ENCODE measurements at regions of chr10 and their contacts with region 1.

Region 1: GRCh38 chr10:112774798-112775197 is 175.2 kb upstream of the TCF7L2 start:
- DNase-seq: peak in 2 of 10 donors; percentile 24 to 47
- H3K4me3 ChIP-seq: no peak overlapping the region
- H3K27ac ChIP-seq: no peak overlapping the region
- H3K27me3 ChIP-seq: no peaks in the 10 kb centered on the region
- CTCF ChIP-seq: no peak

Region 2: GRCh38 chr10:112728118-112728883 is 46.5 kb before region 1 on chr10:
- intact Hi-C with region 1: loop called in 1 of 2 experiments (anchors 5 kb)
- DNase-seq: no peak
- H3K4me3 ChIP-seq: no peak overlapping the region
- H3K27ac ChIP-seq: no peak overlapping the region
- H3K27me3 ChIP-seq: no peaks in the 10 kb centered on the region
- CTCF ChIP-seq: no peak

Measured in dorsolateral prefrontal cortex (tissue), 120 donors.